Mucosa of descending colon (tissue), 3 donors: ENCODE measurements at regions of chr2 and their contacts with region 1.

Region 1: DNA sequence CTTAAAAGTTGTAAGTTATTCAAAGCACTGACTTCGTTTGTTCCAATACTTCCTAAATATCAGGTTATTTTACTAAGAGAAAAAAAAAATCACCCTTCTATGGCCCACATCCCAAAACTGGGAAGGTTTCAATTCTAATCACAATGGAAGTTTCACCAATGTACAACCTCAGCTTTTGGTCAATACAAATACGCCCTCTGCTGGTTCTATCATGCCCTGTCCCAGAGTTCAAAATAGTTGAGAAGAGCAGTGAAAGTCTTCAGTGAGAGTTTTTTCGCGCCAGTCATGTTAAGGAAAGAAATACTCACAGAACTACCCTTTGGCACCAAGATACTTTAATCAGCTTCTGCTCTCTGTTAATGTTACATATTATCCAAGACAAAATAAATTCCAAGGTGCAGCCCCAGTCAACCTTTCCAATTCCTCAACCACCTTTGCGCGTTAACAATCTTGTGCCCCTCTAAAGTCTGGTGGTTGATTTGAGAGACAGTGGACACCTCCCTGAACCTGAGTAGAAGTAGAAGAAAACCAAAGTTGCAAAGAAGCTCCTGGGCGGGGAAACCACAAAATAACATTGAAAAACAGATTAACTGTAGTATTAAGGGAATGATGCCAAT is 59.9 kb downstream of the SUMO1 start:
- DNase-seq: peak in 1 of 3 donors; percentile 84
- ATAC-seq: peak; percentile 80
- H3K4me3 ChIP-seq: no peak overlapping the region
- H3K4me1 ChIP-seq: no peaks in the 10 kb centered on the region
- CTCF ChIP-seq: peak; percentile 51

Region 2: DNA sequence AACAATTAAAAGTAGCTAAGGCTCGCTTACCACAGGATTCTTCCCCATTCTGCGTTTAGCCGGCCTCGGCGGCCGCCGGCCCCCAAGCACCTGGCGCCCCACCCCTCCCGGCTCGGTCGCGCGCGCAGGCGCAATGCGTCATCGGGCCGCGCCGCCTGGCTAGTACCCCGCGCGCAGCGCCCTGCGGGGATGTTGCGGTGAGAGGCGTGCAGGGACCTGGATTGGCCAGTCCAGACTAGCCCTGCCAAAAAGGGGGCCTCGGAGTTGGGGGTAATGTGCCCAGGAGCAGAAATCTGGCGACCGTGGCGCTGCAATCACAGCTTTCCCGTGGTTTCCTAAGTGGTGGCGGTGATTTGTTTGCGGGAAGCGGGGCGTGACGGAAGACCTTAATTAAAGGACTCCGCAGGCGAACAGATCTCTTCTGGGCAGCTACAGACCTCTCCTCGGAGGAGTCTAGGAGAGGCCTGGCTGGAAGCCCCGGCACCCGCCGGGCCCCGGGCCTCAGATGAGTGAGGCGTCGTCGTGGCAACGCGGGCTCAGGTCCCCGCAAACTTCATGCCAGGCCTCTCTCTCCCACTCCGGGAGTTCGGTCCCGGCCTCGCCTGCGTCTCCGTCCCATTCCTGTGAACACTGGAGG is 535.8 kb before region 1 on chr2:
- intact Hi-C with region 1: no loop called
- DNase-seq: peak; percentile 85 to 90 (median 87)
- ATAC-seq: peak; percentile 98
- H3K4me3 ChIP-seq: peak overlapping the region; percentile 65
- H3K4me1 ChIP-seq: peaks cover 5% of the 10 kb centered on the region
- CTCF ChIP-seq: no peak

Region 3: DNA sequence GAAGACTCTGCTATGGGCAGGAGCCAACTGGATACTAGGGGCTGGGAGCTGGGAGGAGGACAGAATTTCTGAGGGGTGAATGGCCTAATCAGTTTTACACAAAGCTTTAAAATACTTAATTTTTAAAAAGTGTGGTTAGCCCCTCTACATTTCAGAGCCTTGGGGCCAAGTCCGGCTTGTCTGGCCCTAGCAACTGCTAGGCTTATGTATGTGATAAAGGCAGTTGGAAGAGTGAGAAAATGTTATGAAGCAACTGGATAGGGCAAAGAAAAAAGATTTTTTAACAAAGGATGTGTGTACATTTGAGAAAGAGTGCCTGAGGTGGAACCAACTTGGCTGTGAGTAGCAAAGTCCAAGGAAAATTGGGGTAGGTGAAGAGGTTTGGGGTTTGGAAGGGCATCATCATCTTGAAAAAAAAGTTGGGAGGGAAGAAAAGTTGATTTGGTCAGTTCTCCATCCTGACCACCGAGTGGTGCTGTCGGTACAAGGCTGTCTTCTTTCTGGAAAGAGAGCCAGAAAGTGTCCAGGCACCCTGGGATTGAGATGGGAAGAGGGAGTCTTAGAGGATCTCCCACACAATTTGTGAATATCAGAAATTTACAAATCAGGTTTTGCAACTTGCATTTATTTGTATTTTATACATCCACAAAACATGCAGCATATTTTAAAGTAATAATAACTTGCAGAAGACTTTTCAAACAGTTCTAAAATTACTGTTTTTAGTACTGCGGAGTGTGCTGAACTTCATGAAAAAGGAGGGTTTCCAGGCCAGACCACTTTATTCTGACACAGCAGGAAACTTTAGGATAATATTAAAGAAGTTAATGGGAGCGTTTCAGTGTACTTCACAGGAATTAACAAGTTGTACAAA is 382.6 kb before region 1 on chr2:
- intact Hi-C with region 1: loop called (anchors 10 kb)
- DNase-seq: peak in 1 of 3 donors; percentile 17
- ATAC-seq: peak; percentile 47
- H3K4me3 ChIP-seq: no peak overlapping the region
- H3K4me1 ChIP-seq: no peaks in the 10 kb centered on the region
- CTCF ChIP-seq: peak; percentile 29

Region 4: DNA sequence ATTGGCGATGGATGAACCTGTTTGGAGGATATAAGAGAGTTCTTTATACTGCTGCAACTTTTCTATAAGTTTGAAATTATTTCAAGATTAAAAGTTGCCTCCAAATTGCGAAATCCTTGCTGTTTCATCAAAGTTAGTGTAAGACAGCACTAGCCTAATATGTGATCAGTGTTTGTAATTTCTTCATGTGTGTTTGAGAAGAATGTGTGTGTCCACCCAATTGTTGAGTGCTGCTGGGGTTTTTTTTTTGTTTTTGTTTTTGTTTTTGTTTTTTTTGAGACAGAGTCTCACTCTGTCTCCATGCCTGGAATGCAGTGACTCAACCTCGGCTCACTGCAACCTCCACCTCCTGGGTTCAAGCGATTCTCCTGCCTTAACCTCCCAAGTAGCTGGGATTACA is 338.7 kb before region 1 on chr2:
- intact Hi-C with region 1: no loop called
- DNase-seq: no peak
- ATAC-seq: no peak
- H3K4me3 ChIP-seq: no peak overlapping the region
- H3K4me1 ChIP-seq: no peaks in the 10 kb centered on the region
- CTCF ChIP-seq: no peak

Region 5: GRCh38 chr2:201860636-201861066 is 317.8 kb before region 1 on chr2:
- intact Hi-C with region 1: loop called (anchors 2 to 5 kb)
- DNase-seq: peak in 1 of 3 donors; percentile 75
- ATAC-seq: peak; percentile 80
- H3K4me3 ChIP-seq: no peak overlapping the region
- H3K4me1 ChIP-seq: peaks cover 3% of the 10 kb centered on the region
- CTCF ChIP-seq: peak; percentile 71

Region 6: GRCh38 chr2:202033321-202034248 is 144.9 kb before region 1 on chr2 and contains the start of gene FZD7:
- intact Hi-C with region 1: loop called in 1 of 2 experiments (anchors 10 kb)
- DNase-seq: peak; percentile 92 to 95 (median 93)
- ATAC-seq: peak; percentile 89
- H3K4me3 ChIP-seq: peak within 1 kb of the TSS; percentile 40
- H3K4me1 ChIP-seq: peaks cover 17% of the 10 kb centered on the region
- CTCF ChIP-seq: no peak
- total RNA-seq, gene FZD7: 4.8 to 84.3 (median 5.9) TPM